GM13977 (cell line): ENCODE measurements at regions of chr18 and their contacts with region 1.

Region 1: GRCh38 chr18:23131693-23132319 is 3.5 kb upstream of the CABLES1 start:
- DNase-seq: peak; percentile 81
- CTCF ChIP-seq: peak; percentile 61

Region 2: GRCh38 chr18:23259701-23260582 is 128.1 kb after region 1 on chr18:
- in situ Hi-C with region 1: loop called (anchors 10 kb)
- DNase-seq: peak; percentile 52
- CTCF ChIP-seq: no peak

Region 3: DNA sequence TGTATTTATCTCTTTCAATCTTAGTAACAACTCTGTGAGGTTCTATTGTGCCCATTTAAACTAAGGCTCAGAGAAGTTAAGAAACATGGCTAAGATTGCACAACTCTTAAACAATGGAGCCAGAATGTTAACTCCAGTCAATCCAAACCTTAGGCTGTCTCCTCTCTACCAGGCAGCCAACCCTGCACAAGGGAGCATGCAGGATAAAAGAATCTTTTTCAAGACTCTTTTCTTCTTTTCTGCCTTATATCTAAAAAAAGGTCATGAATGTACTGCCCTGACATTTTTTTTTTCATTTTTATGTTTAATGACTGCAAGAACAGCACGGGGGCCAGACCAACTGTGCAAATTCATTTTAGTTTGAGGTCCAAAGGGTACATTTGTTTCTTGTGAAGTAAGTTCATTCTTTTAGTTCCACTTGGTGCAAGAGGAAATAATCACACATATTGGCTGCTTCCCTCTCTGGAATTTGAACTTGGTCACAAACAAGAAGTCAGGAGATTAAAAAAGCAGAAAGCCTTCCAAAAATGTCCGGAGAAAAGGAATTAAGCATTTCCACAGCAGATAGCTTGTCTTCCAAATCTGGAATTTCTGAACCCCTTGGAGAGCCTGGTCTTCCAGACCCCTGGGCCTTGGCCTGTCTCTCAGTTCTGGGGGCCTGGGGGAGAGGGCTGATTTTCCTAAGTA is 225.3 kb after region 1 on chr18:
- in situ Hi-C with region 1: loop called (anchors 10 kb)
- DNase-seq: no peak
- CTCF ChIP-seq: no peak